Endothelial cell of umbilical vein (primary cell): ENCODE measurements at regions of chr10 and their contacts with region 1.

Region 1: DNA sequence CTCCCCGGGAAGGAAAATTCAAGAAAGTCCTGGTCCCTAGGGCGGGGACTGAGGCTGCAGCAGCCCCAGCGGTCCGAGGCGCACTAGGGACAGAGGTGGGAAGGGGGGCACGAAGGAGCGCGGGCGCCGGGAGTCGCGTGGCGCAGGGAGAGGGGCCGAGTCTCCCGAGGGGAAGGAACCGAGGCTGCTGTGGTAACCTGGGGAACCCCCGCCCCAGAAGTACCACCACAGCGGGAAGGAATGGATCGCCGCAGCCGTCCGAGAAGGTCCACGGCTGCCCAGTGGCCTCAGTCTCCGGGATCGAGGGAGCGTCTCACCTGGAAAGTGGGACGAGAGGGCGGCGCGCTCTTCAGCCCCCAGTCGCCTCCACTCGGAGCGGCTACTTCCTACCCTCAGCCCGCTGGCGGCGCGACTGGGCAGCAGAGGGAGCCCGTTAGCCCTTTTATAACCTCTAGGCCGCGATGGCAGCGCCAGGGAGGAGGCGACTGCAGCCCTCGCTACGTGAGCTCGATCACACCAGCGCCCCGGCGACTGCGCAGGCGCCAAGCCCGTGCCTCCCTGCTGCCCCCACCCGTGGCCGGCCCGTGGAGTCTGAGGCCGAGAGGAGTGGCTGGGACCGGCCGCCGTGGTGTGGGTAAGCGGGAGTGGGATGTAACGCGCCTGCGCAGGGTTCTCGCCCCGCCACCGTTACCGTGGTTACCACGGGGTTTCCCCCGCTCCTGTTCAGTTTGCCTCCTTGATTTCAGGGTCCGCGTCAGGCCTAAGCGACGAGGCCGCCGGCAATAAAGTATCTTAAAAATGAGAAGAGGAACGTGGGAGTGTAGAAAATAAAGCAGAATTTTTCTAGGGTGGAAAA is at the start of gene P4HA1:
- DNase-seq: peak; percentile 99
- H3K4me3 ChIP-seq: peak within 1 kb of the TSS; percentile 73 to 99 (median 96)
- H3K27ac ChIP-seq: peak within 1 kb of the TSS; percentile 73
- H3K4me1 ChIP-seq: peaks cover 17% of the 10 kb centered on the region
- H3K27me3 ChIP-seq: no peaks in the 10 kb centered on the region
- CTCF ChIP-seq: peak; percentile 70 to 82
- POLR2A ChIP-seq: peak; percentile 98
- total RNA-seq, gene P4HA1: 29.0 and 29.1 TPM in 2 replicates

Region 2: GRCh38 chr10:73044378-73045285 is 52.0 kb before region 1 on chr10:
- CTCF ChIA-PET with region 1: no interaction called
- POLR2A ChIA-PET with region 1: interaction called, 5 read pairs
- dilution Hi-C with region 1: no loop called
- intact Hi-C with region 1: loop called (anchors 1 kb)
- DNase-seq: peak; percentile 96
- H3K4me3 ChIP-seq: peak overlapping the region in 1 of 3 experiments; percentile 35
- H3K27ac ChIP-seq: peak overlapping the region; percentile 96
- H3K4me1 ChIP-seq: peaks cover 16% of the 10 kb centered on the region
- H3K27me3 ChIP-seq: no peaks in the 10 kb centered on the region
- CTCF ChIP-seq: no peak
- POLR2A ChIP-seq: no peak

Region 3: DNA sequence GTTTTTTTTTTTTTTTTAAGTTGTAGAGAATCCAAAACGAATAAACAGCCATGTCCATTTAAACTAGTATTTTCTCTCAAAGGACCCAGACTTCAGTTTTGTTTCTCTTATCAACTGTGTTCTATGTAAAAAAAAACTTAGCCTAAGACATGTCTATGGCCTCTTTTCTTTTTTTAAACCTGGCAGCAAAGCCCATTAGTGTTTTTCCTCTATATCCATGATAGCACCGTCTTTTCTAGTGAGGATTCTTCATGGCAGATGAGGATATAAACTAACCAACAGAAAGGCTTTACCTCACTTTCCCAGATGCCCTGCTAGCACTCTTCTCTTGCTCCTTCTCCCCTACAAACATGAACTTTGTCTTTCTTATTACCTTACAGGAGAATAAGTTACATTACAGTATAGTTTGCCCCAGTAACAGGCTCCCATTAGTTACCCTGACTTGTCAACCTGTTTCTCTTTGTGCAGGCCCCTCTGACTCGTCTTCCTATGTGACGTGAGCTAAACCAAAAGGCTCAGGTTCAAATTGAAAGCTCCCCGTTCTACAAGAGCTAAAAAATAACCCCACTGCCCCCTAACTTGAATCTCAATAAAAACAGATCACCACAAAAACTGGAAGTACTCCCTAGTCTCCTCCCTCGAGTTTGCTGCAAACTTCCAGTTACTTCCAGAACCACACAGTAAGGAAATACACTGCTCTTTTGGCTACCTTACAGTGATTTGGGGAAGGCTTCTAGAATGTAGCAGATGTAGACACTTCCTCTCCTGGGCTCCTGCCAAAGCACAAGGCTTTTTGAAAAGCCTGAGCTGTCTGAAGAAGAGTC is 20.1 kb before region 1 on chr10:
- CTCF ChIA-PET with region 1: interaction called, 22 read pairs
- POLR2A ChIA-PET with region 1: interaction called, 13 read pairs
- dilution Hi-C with region 1: no loop called
- intact Hi-C with region 1: no loop called
- DNase-seq: peak; percentile 81
- H3K4me3 ChIP-seq: peak overlapping the region in 2 of 3 experiments; percentile 9 to 44
- H3K27ac ChIP-seq: peak overlapping the region; percentile 73
- H3K4me1 ChIP-seq: peaks cover 18% of the 10 kb centered on the region
- H3K27me3 ChIP-seq: no peaks in the 10 kb centered on the region
- CTCF ChIP-seq: no peak
- POLR2A ChIP-seq: no peak

Region 4: GRCh38 chr10:73110345-73110849 is 13.7 kb after region 1 on chr10 and contains the start of gene NUDT13:
- CTCF ChIA-PET with region 1: interaction called, 24 read pairs
- POLR2A ChIA-PET with region 1: interaction called, 22 read pairs
- dilution Hi-C with region 1: no loop called
- intact Hi-C with region 1: no loop called
- DNase-seq: peak; percentile 83
- H3K4me3 ChIP-seq: peak within 1 kb of the TSS; percentile 45 to 97 (median 81)
- H3K27ac ChIP-seq: peak within 1 kb of the TSS; percentile 83
- H3K4me1 ChIP-seq: no peaks in the 10 kb centered on the region
- H3K27me3 ChIP-seq: no peaks in the 10 kb centered on the region
- CTCF ChIP-seq: no peak
- POLR2A ChIP-seq: peak; percentile 59
- total RNA-seq, gene NUDT13: 2.3 and 2.6 TPM in 2 replicates

Region 5: GRCh38 chr10:73136627-73137026 is 40.0 kb after region 1 on chr10:
- CTCF ChIA-PET with region 1: interaction called, 13 read pairs
- POLR2A ChIA-PET with region 1: no interaction called
- dilution Hi-C with region 1: no loop called
- intact Hi-C with region 1: loop called (anchors 5 kb)
- DNase-seq: no peak
- H3K4me3 ChIP-seq: no peak overlapping the region
- H3K27ac ChIP-seq: no peak overlapping the region
- H3K4me1 ChIP-seq: no peaks in the 10 kb centered on the region
- H3K27me3 ChIP-seq: no peaks in the 10 kb centered on the region
- CTCF ChIP-seq: no peak
- POLR2A ChIP-seq: no peak

Region 6: DNA sequence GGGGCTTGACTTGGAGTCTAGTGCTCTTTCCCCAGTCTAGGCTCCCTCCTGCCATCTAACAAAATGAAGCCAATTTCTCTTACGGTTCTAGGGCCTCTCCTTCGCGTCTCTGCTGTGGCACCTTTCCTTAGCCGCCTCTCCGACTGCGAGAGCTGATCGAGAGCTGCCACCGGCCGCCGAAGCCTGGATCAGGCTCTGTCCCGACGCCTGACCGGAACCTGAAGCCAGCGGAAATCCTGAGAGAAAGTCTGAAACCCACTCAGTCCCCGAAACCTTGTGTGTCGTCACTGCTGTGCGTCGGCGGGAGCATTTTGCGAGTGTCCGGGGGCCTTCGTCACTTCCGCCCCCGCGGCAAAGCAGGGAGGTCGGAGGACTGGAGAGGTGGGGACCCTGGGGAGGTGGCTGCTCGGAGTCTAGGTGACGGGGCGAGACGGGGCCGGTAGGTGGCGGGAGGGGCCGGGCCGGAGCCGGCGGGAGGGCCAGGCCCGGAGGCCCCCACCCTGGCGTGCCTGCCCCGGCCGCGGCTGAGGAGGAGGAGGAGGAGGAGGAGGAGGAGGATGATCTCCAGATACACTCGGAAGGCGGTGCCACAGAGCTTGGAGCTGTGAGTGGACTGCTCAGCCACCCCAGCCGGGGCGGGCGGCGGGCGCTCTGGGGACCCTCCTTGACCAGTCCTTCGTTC is 71.2 kb after region 1 on chr10 and contains the starts of genes ECD and FAM149B1:
- CTCF ChIA-PET with region 1: interaction called, 6 read pairs
- POLR2A ChIA-PET with region 1: interaction called, 4 read pairs
- dilution Hi-C with region 1: no loop called
- intact Hi-C with region 1: loop called (anchors 2 kb)
- DNase-seq: peak; percentile 98
- H3K4me3 ChIP-seq: peak within 1 kb of the TSS; percentile 24 to 95 (median 81)
- H3K27ac ChIP-seq: peak within 1 kb of the TSS; percentile 79
- H3K4me1 ChIP-seq: peaks cover 9% of the 10 kb centered on the region
- H3K27me3 ChIP-seq: no peaks in the 10 kb centered on the region
- CTCF ChIP-seq: no peak
- POLR2A ChIP-seq: peak; percentile 96
- total RNA-seq, gene ECD: 32.3 and 36.6 TPM in 2 replicates
- total RNA-seq, gene FAM149B1: 18.9 and 19.5 TPM in 2 replicates